Posterior cingulate gyrus (tissue), 11 donors: ENCODE measurements at regions of chr14 and their contacts with region 1.

Region 1: GRCh38 chr14:55438066-55438683 is 2.2 kb downstream of the TBPL2 start:
- DNase-seq: no peak

Region 2: DNA sequence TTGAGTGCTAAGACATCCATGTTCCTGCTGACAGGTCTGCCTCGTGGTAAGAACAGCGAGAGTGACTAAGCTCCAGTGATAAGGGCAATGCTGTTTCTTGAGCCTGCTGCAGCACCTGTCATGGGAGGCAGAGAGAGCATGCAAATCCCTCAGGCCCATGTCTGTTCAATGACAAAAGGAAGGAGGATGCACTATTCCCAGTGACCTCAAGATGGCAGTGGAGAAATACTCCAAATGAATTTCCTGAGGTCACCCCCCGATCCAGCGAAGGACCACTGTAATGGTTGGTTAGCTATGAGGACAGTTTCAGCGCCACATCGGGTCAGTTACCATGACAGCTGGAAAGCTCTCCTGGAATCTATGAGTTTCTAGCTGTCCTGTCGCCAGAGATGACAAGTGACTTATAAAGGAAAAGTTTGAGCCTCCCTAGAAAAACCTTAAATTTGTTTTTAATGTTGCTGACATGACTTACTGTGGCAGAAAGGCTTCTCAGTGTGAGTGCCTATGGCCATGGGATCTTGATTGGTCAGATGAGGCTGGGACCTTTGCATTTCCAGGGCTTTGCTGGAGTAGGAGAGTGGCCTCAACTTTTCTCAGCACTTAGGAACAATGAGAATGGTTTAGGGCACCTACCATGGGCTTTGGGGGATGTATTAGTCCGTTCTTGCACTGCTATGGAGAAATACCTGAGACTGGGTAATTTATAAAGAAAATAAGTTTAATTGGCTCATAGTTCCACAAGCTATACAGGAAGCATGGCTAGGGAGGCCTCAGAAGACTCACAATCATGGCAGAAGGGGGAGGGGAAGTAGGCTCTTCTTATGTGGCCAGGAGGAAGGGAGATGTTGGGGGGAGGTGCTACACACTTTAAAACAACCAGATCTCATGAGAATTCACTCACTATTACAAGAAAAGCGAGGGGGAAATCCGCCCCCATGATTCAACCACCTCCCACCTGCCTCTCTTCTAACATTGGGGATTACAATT is 1053.4 kb after region 1 on chr14:
- intact Hi-C with region 1: loop called (anchors 5 kb)
- DNase-seq: peak in 3 of 10 donors; percentile 11 to 24 (median 14)